Mucosa of descending colon (tissue), 3 donors: ENCODE measurements at regions of chr17 and their contacts with region 1.

Region 1: DNA sequence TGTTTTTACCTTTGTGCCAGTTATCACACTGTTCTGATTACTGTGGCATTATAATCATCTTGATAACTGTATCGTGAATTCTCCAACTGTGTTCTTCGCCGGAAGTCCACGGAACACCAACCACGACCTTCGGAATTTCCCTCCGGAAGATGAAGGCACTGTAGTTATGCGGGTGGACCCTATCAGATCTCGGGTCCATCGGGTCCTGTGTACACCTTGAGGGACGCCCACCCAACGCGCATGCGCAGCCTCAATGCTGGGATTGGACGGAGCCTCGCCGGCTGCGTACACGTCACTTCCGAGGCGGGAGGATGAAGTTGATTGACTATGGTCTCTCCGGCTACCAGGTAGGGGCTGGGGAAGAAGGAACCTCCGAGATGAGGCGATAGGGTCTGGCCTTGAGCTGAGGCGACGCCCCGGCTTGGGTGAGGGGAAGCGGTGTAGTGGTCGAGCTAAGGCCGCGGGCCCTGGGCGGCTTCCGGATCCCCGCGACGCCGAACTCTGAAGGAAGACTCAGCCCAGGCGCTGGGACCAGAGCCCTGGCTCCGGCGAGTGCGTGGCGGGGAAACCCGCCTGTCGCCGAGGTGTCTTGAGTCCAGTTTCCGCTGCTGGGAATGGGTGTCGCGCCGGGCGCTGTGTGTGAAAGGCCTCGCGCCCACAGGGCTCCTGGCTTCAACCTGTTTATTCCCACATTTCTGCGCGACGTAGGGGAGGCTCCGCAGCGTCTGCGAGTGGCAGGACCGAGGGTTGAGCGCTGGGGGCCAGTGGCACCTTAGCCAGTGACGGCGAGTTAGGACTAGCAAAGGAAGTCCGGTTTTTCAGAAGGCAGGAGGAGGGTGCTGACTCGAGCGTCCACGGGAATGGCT is at the start of gene DHRS7B:
- DNase-seq: peak; percentile 97 to 99 (median 98)
- ATAC-seq: peak; percentile 98
- H3K4me3 ChIP-seq: peak within 1 kb of the TSS; percentile 74
- H3K4me1 ChIP-seq: peaks cover 12% of the 10 kb centered on the region
- CTCF ChIP-seq: no peak
- total RNA-seq, gene DHRS7B: 21.9 to 34.0 (median 30.2) TPM

Region 2: DNA sequence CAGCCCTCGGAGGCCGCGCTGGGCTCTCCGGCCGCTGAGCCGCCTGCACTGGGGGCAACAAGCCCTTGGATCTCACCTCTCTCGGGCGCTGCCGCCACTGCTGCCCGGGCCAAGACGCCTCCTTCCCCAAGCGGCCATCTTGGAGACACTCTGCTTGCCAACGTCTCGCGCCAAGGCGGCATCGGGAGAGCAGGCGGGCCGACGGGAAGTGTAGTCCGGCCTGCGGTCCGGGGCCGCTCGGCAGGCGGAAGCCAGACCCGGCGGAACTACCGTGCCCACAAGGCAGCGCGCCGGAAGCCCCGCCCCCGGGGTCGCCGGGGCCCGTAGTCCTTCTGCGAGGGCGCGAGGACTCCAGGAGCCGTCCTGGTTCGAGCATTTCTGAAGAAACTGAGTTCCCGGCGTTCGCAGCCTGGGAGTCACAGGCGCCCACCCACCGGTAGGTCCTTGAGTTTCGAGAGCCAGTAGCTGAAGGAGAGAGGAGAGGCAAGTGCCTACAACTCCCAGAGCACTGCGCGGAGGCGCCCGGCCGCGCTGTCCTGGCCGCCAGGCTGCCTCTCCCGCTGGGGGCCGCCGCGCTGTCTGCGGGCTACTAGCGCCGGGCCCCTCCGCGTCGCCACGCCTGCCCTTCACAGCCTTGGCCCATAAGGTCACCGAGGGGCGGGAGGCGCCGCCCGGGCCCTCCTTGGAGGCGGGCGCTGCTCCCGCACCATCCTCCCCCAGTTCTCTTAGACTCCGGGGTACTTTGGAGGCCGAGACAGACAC is 87.3 kb after region 1 on chr17 and contains the start of gene TMEM11:
- intact Hi-C with region 1: loop called (anchors 10 kb)
- DNase-seq: peak; percentile 94 to 98 (median 96)
- ATAC-seq: peak; percentile 88
- H3K4me3 ChIP-seq: peak within 1 kb of the TSS; percentile 100
- H3K4me1 ChIP-seq: peaks cover 41% of the 10 kb centered on the region
- CTCF ChIP-seq: no peak
- total RNA-seq, gene TMEM11: 25.7 to 34.4 (median 27.1) TPM

Region 3: DNA sequence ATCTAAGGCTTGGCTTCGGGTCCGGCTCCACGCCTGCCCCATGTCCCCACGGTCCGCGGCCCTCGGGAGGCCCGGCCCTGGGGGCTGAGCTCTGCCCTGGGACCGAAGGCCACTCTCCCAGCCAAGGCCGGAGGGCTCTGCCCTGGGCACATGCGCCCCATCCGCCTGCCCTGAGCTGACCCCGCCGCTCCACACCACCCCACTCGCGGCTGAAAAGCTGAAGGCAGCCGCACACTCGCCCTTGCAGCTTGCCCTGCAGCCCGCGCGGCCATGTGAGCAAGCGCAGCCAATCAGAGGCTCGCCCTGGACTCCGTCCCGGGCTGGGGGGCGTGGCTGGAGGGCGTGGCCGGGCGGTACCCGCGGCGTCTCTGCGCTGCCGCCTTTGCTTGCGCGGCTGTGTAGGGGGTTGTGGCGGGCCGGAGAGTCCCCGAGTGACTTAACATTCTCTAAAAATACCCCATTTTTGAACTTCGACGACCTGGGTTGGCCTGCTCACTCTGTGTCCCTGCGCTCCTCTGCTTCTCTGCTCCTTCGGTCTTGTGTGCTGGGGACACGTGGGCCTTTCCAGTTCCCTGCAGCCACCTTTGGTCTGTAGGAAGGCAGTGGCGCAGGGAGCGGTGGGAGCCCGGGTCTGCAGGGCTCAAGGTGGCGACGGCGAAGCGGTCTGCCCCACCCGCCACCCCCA is 148.8 kb after region 1 on chr17:
- intact Hi-C with region 1: loop called in 1 of 2 experiments (anchors 10 kb)
- DNase-seq: peak; percentile 97 to 98 (median 98)
- ATAC-seq: peak; percentile 94
- H3K4me3 ChIP-seq: peak overlapping the region; percentile 27
- H3K4me1 ChIP-seq: peaks cover 13% of the 10 kb centered on the region
- CTCF ChIP-seq: no peak